Aorta (tissue), 5 donors: ENCODE measurements at regions of chr2 and their contacts with region 1.

Region 1: DNA sequence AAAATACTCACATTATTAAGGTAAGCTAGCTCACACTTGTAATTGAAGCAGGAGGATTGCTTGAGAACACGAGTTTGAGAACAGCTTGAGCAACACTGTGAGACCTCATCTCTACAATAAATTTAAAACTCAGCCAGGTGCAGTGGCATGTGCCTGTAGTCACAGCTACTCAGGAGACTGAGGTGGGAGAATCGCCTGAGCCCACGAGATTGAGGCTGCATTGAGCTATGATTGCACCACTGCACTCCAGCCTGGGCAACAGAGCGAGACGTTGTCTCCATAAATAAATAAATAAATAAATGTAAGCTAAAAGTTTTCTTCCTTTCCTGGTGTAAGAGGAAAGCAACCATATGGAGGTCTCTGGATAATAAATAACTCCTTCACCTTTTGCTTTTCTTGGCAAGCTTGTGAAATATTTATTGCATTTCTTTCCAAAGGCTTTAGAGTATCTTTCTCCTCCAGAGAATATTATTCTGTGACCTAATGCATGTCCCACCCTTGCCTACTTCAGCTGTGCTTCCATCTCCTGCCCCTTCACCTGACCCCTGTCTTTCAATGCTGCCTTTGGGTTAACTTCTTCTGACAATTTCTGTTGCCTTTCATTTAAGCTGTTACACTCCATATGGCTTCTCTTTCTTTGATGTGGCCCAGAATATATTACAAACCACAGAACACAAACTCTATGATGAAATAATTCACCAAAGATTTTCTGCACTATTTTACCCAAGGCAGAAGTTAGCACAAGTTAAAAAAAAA is 280.7 kb upstream of the RND3 start:
- DNase-seq: no peak
- ATAC-seq: no peak
- H3K4me3 ChIP-seq: no peak overlapping the region
- H3K27ac ChIP-seq: no peak overlapping the region
- H3K4me1 ChIP-seq: no peaks in the 10 kb centered on the region
- H3K27me3 ChIP-seq: no peaks in the 10 kb centered on the region

Region 2: GRCh38 chr2:150824118-150824517 is 55.9 kb after region 1 on chr2:
- intact Hi-C with region 1: loop called in 1 of 2 experiments (anchors 2 kb)
- DNase-seq: no peak
- ATAC-seq: no peak
- H3K4me3 ChIP-seq: no peak overlapping the region
- H3K27ac ChIP-seq: no peak overlapping the region
- H3K4me1 ChIP-seq: no peaks in the 10 kb centered on the region
- H3K27me3 ChIP-seq: no peaks in the 10 kb centered on the region